ENCODE measurements at regions of chr1 and their contacts with region 1.

Region 1: GRCh38 chr1:9145021-9145668 is 16.2 kb upstream of the GPR157 start:
- DNase-seq: no peak
- ATAC-seq: peak; percentile 62
- H3K4me3 ChIP-seq: no peak overlapping the region
- H3K27ac ChIP-seq: no peak overlapping the region; the same call in 1 of the 2 replicates
- H3K4me1 ChIP-seq: peaks cover 17% of the 10 kb centered on the region
- H3K27me3 ChIP-seq: no peaks in the 10 kb centered on the region
- CTCF ChIP-seq: no peak
- EP300 ChIP-seq: no peak
- POLR2A ChIP-seq: no peak
- RAD21 ChIP-seq: no peak

Region 2: GRCh38 chr1:8643542-8644536 is 501.3 kb before region 1 on chr1:
- CTCF ChIA-PET with region 1: no interaction called
- POLR2A ChIA-PET with region 1: no interaction called
- RAD21 ChIA-PET with region 1: no interaction called
- SMC1A ChIA-PET with region 1: no interaction called
- in situ Hi-C with region 1: no loop called
- intact Hi-C with region 1: no loop called
- DNase-seq: peak; percentile 94
- ATAC-seq: peak; percentile 95
- H3K4me3 ChIP-seq: no peak overlapping the region
- H3K27ac ChIP-seq: peak overlapping the region; percentile 75
- H3K4me1 ChIP-seq: peaks cover 43% of the 10 kb centered on the region
- H3K27me3 ChIP-seq: no peaks in the 10 kb centered on the region
- CTCF ChIP-seq: no peak
- EP300 ChIP-seq: peak; percentile 52 to 61; a peak in 1 of 4 replicates
- POLR2A ChIP-seq: no peak
- RAD21 ChIP-seq: 0 out of 2 replicates have a peak, but pooled peaks have one; percentile 27

Region 3: DNA sequence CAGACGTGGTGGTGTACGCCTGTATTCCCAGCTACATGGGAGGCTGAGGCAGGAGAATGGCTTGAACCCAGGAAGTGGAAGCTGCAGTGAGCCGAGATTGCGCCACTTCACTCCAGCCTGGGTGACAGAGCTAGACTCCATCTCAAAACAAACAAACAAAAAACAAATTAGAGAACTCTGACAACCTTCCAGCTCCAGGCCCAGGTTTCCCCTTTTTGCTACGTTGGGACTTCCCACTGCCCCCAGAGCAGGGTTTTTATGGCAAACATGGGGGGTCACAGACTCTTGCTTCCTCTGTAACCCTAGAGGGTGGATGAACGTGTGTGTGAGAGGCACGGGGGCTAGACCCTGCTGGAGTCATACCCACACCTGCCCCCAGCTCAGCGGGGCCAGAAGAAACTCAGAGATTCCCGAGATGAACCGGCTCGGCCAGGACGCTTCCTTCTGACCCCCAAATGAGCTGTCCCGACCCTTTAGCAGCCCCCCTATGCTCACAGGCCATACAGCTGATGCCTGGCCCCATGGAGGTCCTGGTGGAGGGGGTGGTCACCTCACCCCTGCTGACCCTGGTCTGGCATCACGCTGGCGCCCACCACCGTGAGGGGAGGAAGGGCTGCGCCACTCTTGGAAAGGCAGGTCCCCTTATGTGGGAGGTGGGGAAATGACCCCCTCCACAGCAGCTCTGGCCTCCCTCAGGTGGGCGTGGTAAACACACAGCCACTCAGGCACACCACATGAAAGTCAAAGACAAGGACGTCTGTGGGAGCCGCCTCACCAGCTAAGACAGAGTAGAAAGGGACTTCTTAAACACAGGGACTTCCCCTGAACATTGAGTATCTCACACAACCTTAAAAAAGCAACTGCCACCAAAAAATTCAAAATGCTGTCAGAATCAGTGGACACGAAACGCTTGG is 23.4 kb before region 1 on chr1:
- CTCF ChIA-PET with region 1: interaction called, 46 read pairs
- POLR2A ChIA-PET with region 1: interaction called, 3 read pairs
- RAD21 ChIA-PET with region 1: no interaction called
- SMC1A ChIA-PET with region 1: interaction called, 5 read pairs
- in situ Hi-C with region 1: no loop called
- intact Hi-C with region 1: no loop called
- DNase-seq: peak; percentile 71
- ATAC-seq: peak; percentile 89
- H3K4me3 ChIP-seq: peak overlapping the region; percentile 53; the same call in 1 of the 2 replicates
- H3K27ac ChIP-seq: peak overlapping the region; percentile 74
- H3K4me1 ChIP-seq: peaks cover 40% of the 10 kb centered on the region
- H3K27me3 ChIP-seq: no peaks in the 10 kb centered on the region
- CTCF ChIP-seq: no peak
- EP300 ChIP-seq: peak; percentile 33 to 41; a peak in 1 of 4 replicates
- POLR2A ChIP-seq: no peak
- RAD21 ChIP-seq: no peak

Region 4: DNA sequence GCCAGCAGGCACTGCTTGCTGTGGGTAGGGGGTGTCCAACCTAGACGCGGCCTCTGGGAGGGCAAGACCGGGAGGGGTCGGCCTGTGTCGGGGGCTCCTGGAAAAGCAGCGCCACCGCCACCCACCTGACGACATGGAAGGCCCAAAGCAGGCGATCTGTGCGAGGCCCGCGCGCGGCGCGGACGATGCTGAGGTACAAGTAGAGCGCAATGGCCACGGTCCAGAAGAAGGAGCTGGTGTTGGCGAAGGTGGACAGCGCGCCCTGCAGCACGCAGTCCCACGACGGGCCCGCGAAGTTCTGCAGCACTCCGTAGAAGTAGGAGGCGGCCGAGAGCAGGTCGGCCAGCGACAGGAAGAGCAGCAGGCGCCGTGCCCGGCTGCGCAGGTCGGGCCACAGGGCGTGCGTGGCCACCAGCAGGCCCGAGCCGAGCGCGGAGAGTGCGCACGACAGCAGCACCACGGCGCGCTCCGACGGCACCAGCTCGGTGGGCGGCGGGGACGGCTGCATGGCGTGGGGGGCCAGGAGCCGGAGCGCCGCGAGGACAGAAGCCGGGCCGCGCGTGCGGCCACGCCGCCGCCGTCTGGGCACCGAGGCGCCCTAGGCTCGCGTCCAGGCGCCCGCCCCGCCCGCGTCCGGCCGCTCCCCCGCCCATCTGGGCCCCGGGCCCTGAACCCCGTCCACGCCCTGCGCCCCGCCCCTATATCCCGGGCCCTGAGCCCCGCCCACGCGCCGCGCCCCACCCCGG is 16.5 kb before region 1 on chr1 and contains the start of gene GPR157:
- CTCF ChIA-PET with region 1: interaction called, 47 read pairs
- POLR2A ChIA-PET with region 1: interaction called, 14 read pairs
- RAD21 ChIA-PET with region 1: interaction called, 6 read pairs
- SMC1A ChIA-PET with region 1: interaction called, 11 read pairs
- in situ Hi-C with region 1: no loop called
- intact Hi-C with region 1: no loop called
- DNase-seq: no peak
- ATAC-seq: peak; percentile 81
- H3K4me3 ChIP-seq: peak within 1 kb of the TSS; percentile 85
- H3K27ac ChIP-seq: peak within 1 kb of the TSS; percentile 23
- H3K4me1 ChIP-seq: peaks cover 28% of the 10 kb centered on the region
- H3K27me3 ChIP-seq: no peaks in the 10 kb centered on the region
- CTCF ChIP-seq: peak in 2 of 3 experiments; percentile 8 to 26; a peak in 1 of 6 replicates
- EP300 ChIP-seq: no peak
- POLR2A ChIP-seq: peak; percentile 31; the same call in 1 of the 2 replicates
- RAD21 ChIP-seq: no peak
- polyA plus RNA-seq, gene GPR157: 0.66 to 1.1 TPM

Region 5: GRCh38 chr1:9166289-9167235 is 21.4 kb after region 1 on chr1:
- CTCF ChIA-PET with region 1: interaction called, 14 read pairs
- POLR2A ChIA-PET with region 1: interaction called, 3 read pairs
- RAD21 ChIA-PET with region 1: interaction called, 9 read pairs
- SMC1A ChIA-PET with region 1: interaction called, 7 read pairs
- in situ Hi-C with region 1: no loop called
- intact Hi-C with region 1: no loop called
- DNase-seq: no peak
- ATAC-seq: no peak
- H3K4me3 ChIP-seq: no peak overlapping the region
- H3K27ac ChIP-seq: no peak overlapping the region
- H3K4me1 ChIP-seq: peaks cover 39% of the 10 kb centered on the region
- H3K27me3 ChIP-seq: no peaks in the 10 kb centered on the region
- CTCF ChIP-seq: no peak
- EP300 ChIP-seq: no peak
- POLR2A ChIP-seq: no peak
- RAD21 ChIP-seq: no peak

Region 6: DNA sequence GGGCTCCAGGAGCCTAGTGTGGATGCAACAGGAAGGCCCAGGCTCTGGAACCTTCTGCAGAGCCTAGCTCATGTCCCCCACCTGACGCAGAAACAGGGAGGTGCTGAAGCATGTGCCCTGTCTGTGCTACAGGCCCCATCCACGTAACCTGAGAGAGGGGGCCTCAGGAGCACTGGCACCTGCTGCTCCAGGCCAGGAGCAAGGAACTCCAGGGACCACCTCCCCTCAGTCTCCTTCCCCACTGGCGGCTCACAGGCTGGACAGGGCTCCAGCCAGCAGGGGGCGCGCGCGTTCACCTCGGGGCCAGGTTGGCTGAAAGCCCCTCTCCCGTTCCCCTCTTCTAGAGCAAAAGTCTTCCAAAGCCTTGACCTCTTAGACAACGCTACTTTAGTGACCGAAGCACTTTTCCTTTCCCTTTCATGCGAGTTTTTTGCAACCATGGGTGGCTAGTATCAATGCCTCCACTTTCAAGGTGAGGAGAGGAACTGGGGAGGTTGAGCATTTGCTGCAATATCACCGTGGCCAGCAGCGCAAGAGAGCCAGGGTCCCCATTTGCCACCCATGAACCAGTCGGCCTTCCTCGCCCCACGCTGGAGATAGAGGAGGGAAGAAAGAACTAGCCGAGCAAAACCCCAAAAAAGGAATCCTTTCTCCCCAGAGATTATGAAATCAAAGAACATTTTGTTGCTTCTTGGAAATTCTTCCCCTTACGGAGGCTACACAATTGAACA is 36.2 kb after region 1 on chr1:
- CTCF ChIA-PET with region 1: interaction called, 30 read pairs
- POLR2A ChIA-PET with region 1: interaction called, 3 read pairs
- RAD21 ChIA-PET with region 1: interaction called, 6 read pairs
- SMC1A ChIA-PET with region 1: interaction called, 12 read pairs
- in situ Hi-C with region 1: no loop called
- intact Hi-C with region 1: no loop called
- DNase-seq: peak; percentile 43
- ATAC-seq: peak; percentile 75
- H3K4me3 ChIP-seq: peak overlapping the region; percentile 90
- H3K27ac ChIP-seq: peak overlapping the region; percentile 84
- H3K4me1 ChIP-seq: peaks cover 17% of the 10 kb centered on the region
- H3K27me3 ChIP-seq: no peaks in the 10 kb centered on the region
- CTCF ChIP-seq: peak; percentile 93 to 98 (median 97); a peak in 5 of 6 replicates
- EP300 ChIP-seq: no peak
- POLR2A ChIP-seq: peak; percentile 56; the same call in 1 of the 2 replicates
- RAD21 ChIP-seq: peak; percentile 23; the same call in 1 of the 2 replicates

Region 7: GRCh38 chr1:9201401-9202239 is 56.5 kb after region 1 on chr1:
- CTCF ChIA-PET with region 1: interaction called, 49 read pairs
- POLR2A ChIA-PET with region 1: no interaction called
- RAD21 ChIA-PET with region 1: interaction called, 14 read pairs
- SMC1A ChIA-PET with region 1: interaction called, 39 read pairs
- in situ Hi-C with region 1: no loop called
- intact Hi-C with region 1: loop called (anchors 1 kb)
- DNase-seq: no peak
- ATAC-seq: peak; percentile 37
- H3K4me3 ChIP-seq: peak overlapping the region; percentile 20; the same call in 1 of the 2 replicates
- H3K27ac ChIP-seq: no peak overlapping the region
- H3K4me1 ChIP-seq: peaks cover 48% of the 10 kb centered on the region
- H3K27me3 ChIP-seq: peaks cover 0 to 32% of the 10 kb centered on the region in 2 experiments; a peak in 3 of 4 replicates
- CTCF ChIP-seq: no peak
- EP300 ChIP-seq: no peak
- POLR2A ChIP-seq: no peak
- RAD21 ChIP-seq: no peak

Measured in GM12878 (cell line).